ENCODE measurements at regions of chr17 and their contacts with region 1.

Region 1: GRCh38 chr17:13337864-13338371 is 263.8 kb downstream of the HS3ST3A1 start:
- DNase-seq: peak; percentile 6
- H3K4me3 ChIP-seq: no peak overlapping the region
- H3K27ac ChIP-seq: no peak overlapping the region
- H3K4me1 ChIP-seq: no peaks in the 10 kb centered on the region
- H3K27me3 ChIP-seq: no peaks in the 10 kb centered on the region
- CTCF ChIP-seq: peak in 3 of 4 experiments; percentile 44 to 65 (median 55)
- POLR2A ChIP-seq: no peak

Region 2: GRCh38 chr17:13594762-13595598 is 257.1 kb after region 1 on chr17:
- intact Hi-C with region 1: loop called (anchors 5 kb)
- DNase-seq: peak; percentile 75
- H3K4me3 ChIP-seq: no peak overlapping the region
- H3K27ac ChIP-seq: no peak overlapping the region
- H3K4me1 ChIP-seq: no peaks in the 10 kb centered on the region
- H3K27me3 ChIP-seq: no peaks in the 10 kb centered on the region
- CTCF ChIP-seq: peak; percentile 66 to 86 (median 72)
- POLR2A ChIP-seq: no peak

Measured in prostate gland (tissue), 2 donors.